Heart left ventricle (tissue), 16 donors: ENCODE measurements at regions of chr6 and their contacts with region 1.

Region 1: GRCh38 chr6:134938896-134939295 is 11.0 kb downstream of the ALDH8A1 start:
- DNase-seq: no peak
- ATAC-seq: no peak
- H3K4me3 ChIP-seq: no peak overlapping the region
- H3K27ac ChIP-seq: no peak overlapping the region
- H3K4me1 ChIP-seq: no peaks in the 10 kb centered on the region
- H3K27me3 ChIP-seq: no peaks in the 10 kb centered on the region
- CTCF ChIP-seq: no peak
- POLR2A ChIP-seq: no peak

Region 2: DNA sequence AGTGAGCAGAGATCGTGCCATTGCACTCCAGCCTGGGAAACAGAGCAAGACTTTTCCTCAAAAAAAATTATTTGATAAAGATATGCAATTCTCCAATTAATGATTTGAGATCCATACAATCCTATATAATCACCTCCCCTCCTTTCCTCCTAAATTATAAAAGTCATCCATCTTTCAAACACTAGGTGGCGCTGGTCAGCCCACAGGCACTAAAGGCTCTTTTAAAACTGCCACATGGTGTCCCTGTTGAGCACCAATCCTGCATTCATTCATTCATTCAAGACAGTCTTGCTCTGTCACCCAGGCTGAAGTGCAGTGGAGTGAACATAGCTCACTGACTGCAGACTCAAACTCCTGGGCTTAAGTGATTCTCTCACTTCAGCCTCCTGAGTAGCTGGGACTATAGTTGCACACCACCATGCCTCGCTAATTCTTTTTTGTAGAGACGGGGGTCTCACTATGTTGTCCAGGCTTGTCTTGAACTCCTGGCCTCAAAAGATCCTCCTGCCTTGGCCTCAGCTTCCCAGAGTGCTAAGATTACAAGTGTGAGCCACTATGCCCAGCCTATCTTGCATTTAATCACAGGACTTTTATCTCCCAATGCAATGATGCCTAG is 827.7 kb before region 1 on chr6:
- intact Hi-C with region 1: loop called in 2 of 10 experiments (anchors 5 kb)
- DNase-seq: peak in 1 of 5 donors; percentile 19
- ATAC-seq: no peak
- H3K4me3 ChIP-seq: no peak overlapping the region
- H3K27ac ChIP-seq: no peak overlapping the region
- H3K4me1 ChIP-seq: no peaks in the 10 kb centered on the region
- H3K27me3 ChIP-seq: peaks cover 0 to 14% (median 4%) of the 10 kb centered on the region in 9 donors
- CTCF ChIP-seq: peak; percentile 53 to 84 (median 74)
- POLR2A ChIP-seq: no peak

Region 3: GRCh38 chr6:134123666-134124208 is 815.2 kb before region 1 on chr6:
- intact Hi-C with region 1: loop called in 4 of 10 experiments (anchors 2 to 5 kb)
- DNase-seq: no peak
- ATAC-seq: no peak
- H3K4me3 ChIP-seq: no peak overlapping the region
- H3K27ac ChIP-seq: no peak overlapping the region
- H3K4me1 ChIP-seq: peaks cover 0 to 4% (median 0%) of the 10 kb centered on the region in 12 donors
- H3K27me3 ChIP-seq: no peaks in the 10 kb centered on the region
- CTCF ChIP-seq: peak; percentile 62 to 82 (median 74)
- POLR2A ChIP-seq: peak in 1 of 2 donors; percentile 5

Region 4: DNA sequence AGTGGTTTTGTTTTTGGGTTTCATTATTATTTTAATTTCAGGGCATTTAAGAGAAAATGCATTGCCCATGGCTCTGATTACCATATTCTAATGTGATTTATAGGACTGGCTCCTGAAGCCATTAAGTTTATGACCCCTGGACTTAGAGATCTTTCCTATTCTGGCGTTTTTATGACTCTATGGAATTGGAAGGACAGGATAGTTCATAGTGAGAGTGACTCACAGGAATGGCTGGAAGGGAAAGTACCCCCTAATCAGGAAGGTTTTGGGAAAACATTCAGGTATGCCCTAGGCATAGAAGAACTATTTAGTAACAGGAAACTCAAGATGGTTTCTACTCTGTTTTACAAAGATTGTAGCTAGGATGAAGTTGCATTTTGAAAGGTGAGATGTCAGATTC is 777.9 kb before region 1 on chr6:
- intact Hi-C with region 1: loop called in 9 of 10 experiments (anchors 2 to 10 kb)
- DNase-seq: no peak
- ATAC-seq: no peak
- H3K4me3 ChIP-seq: no peak overlapping the region
- H3K27ac ChIP-seq: no peak overlapping the region
- H3K4me1 ChIP-seq: no peaks in the 10 kb centered on the region
- H3K27me3 ChIP-seq: no peaks in the 10 kb centered on the region
- CTCF ChIP-seq: no peak
- POLR2A ChIP-seq: no peak